ENCODE measurements at regions of chr7 and their contacts with region 1.

Region 1: DNA sequence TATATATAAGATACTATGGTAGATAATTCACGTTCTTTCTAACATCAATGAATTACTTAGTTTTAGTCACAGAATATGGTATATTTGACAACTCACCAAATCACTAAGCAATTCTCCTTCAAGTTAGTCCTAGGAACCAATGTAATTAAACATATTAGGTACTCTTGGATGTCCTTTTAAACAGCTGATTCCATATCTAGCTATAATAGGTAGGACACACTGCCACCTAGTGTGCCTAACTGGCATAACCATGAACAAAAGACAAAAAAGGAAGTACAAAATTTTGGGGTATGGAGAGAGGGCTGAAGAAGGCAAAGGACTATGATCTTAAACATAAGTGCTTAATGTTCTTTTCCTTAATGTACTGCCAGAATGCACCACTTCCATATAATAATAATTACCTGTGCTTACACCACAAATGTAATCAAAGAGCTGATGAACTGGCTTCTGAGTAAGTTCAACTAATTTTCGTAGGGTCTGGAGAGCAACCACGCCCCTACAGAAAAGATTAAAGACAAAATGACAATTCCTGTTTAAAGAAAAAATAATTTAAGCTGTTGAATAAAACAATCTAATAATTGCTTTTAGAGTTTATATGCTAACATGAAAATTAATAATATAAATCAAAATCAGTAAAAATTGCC is 28.7 kb downstream of the PNPLA8 start:
- DNase-seq: peak; percentile 3
- H3K4me3 ChIP-seq: no peak overlapping the region
- H3K27ac ChIP-seq: no peak overlapping the region
- H3K27me3 ChIP-seq: no peaks in the 10 kb centered on the region
- CTCF ChIP-seq: peak; percentile 86

Region 2: GRCh38 chr7:108181073-108181985 is 315.9 kb before region 1 on chr7:
- CTCF ChIA-PET with region 1: interaction called, 72 read pairs
- POLR2A ChIA-PET with region 1: no interaction called
- DNase-seq: peak; percentile 30
- H3K4me3 ChIP-seq: no peak overlapping the region
- H3K27ac ChIP-seq: no peak overlapping the region
- H3K27me3 ChIP-seq: peaks cover 7% of the 10 kb centered on the region
- CTCF ChIP-seq: peak; percentile 67

Region 3: DNA sequence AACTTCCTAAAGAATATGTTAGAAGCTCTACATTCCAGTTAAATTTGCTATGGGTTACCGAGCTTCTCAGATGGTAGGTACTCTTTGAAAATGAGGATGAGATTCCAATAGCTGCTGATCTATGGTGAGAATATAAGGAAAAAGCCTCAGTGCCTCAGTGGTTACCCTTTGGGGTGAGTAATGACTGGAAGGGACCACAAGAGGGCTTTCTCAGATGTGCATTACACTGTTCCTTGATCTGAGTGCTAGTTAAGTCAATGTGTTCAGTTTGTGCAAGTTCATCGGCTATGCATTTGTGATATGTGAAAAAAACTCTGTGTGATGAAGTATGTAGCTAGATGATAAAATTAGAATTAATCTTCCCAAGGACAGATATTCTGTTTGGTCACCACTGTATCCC is 44.5 kb before region 1 on chr7:
- CTCF ChIA-PET with region 1: interaction called, 53 read pairs
- POLR2A ChIA-PET with region 1: no interaction called
- DNase-seq: no peak
- H3K4me3 ChIP-seq: no peak overlapping the region
- H3K27ac ChIP-seq: no peak overlapping the region
- H3K27me3 ChIP-seq: peaks cover 54% of the 10 kb centered on the region
- CTCF ChIP-seq: peak; percentile 68

Region 4: GRCh38 chr7:108480311-108480710 is 16.9 kb before region 1 on chr7:
- CTCF ChIA-PET with region 1: interaction called, 76 read pairs
- POLR2A ChIA-PET with region 1: no interaction called
- DNase-seq: no peak
- H3K4me3 ChIP-seq: no peak overlapping the region
- H3K27ac ChIP-seq: no peak overlapping the region
- H3K27me3 ChIP-seq: no peaks in the 10 kb centered on the region
- CTCF ChIP-seq: no peak

Region 5: DNA sequence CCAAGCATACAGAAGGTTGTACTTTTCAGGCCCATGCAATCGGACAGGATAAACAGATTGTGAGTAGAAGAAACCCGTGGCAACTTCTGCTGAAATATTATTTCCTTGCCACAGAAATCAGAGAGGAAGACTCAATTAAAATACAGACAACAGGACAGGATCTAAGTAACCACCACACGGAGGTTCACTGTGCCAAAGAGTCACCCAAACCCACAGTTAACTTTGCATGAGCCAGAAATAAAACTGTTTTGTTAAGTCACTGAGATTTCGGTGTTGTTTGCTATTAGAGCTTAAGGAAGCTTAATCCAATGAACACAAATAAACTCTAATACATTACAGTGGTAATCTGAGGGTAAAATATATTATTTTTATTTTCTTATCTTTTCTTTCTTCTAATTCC is 14.7 kb after region 1 on chr7:
- CTCF ChIA-PET with region 1: interaction called, 42 read pairs
- POLR2A ChIA-PET with region 1: no interaction called
- DNase-seq: no peak
- H3K4me3 ChIP-seq: no peak overlapping the region
- H3K27ac ChIP-seq: no peak overlapping the region
- H3K27me3 ChIP-seq: no peaks in the 10 kb centered on the region
- CTCF ChIP-seq: no peak

Region 6: GRCh38 chr7:108525985-108526767 is 29.0 kb after region 1 on chr7 and contains the start of gene PNPLA8:
- CTCF ChIA-PET with region 1: interaction called, 60 read pairs
- POLR2A ChIA-PET with region 1: no interaction called
- DNase-seq: peak; percentile 97
- H3K4me3 ChIP-seq: peak within 1 kb of the TSS; percentile 88
- H3K27ac ChIP-seq: peak within 1 kb of the TSS; percentile 99
- H3K27me3 ChIP-seq: no peaks in the 10 kb centered on the region
- CTCF ChIP-seq: no peak
- polyA plus RNA-seq, gene PNPLA8: 18.7 and 26.7 TPM in 2 replicates